ENCODE measurements at regions of chr15 and their contacts with region 1.

Region 1: DNA sequence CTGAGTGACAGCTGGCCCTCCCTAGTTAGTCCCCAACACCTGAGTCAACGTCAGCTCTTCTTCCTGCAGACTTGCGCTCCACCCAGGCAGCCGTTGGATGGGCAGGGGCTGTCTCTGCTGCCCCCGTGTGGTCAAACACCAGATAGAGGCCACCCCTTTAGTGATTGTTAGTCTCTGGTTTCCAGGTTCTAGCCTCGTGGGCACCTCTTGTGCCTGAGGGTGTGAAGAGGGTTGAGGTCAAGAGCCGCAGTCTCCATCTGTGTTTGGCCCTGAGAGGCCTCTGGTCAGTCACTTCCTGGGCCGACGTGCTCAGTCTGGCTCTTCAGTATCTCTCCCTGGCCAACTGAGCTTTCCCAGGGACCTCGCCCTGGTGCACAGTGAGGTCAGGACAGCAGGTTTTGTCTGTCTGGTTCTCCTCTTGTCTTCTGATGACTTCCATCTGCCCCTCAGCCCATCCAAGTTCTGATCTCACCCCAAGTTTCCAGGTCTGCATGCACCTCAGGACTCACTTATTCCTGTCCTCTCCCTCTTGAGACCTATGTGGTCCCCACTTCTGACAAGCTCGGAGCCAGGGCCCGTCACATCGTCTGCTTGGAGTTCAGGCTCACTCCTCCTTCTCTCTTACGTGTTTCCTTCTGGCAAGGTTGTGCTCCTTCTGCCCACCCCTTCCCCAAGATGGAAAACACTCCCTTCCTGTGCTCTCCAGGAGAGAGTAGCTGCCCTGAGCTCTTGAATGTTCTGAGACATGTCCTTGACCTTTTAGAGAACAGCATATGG is 20.9 kb downstream of the CD276 start:
- DNase-seq: no peak
- H3K4me3 ChIP-seq: no peak overlapping the region
- H3K27ac ChIP-seq: no peak overlapping the region
- H3K4me1 ChIP-seq: no peaks in the 10 kb centered on the region
- H3K27me3 ChIP-seq: no peaks in the 10 kb centered on the region
- CTCF ChIP-seq: peak; percentile 32 to 60 (median 53)
- POLR2A ChIP-seq: no peak

Region 2: GRCh38 chr15:73686781-73687256 is 18.2 kb before region 1 on chr15:
- intact Hi-C with region 1: loop called (anchors 1 kb)
- DNase-seq: no peak
- H3K4me3 ChIP-seq: peak overlapping the region in 1 of 3 donors; percentile 90
- H3K27ac ChIP-seq: peak overlapping the region; percentile 83 to 87
- H3K4me1 ChIP-seq: peaks cover 0 to 10% of the 10 kb centered on the region in 2 donors
- H3K27me3 ChIP-seq: no peaks in the 10 kb centered on the region
- CTCF ChIP-seq: no peak
- POLR2A ChIP-seq: no peak

Measured in breast epithelium (tissue), 4 donors.